Aorta (tissue), 5 donors: ENCODE measurements at regions of chr6 and their contacts with region 1.

Region 1: DNA sequence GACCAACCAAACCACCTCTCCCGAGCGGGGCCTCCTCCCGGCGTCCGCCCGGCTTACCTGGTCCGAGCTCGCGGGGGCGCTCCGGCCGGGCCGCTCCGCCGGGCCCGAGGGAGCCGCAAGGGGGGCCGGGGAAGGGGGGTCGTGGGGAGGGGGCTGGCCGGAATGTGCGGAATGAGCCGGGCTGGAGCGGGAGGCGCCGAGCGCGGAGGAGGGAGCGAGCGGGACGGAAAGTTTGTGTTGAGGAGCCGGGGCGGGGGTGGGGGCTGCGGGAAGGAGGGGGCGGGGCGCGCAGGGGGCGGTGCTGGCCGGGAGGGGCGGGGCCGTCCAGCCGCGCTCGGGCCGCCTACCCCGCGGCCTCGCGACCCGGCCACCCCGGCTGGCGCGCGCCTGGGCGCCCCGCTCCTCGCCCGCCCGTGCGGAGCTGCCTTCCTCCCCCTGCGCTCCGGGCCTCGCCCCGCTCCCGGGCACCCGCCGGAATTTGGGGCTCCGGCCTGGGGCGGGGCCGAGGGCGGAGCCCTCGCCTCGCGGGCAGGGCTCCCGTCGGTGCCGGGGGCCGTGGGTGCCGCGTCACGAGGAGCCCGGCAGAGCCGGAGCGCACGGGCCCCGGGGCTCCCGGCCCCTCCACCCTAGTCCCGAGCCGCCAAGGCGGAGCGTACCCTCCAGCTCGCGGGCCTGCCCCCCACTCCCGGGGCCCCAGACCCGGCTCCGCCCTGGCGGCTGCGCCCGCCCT is at the start of gene TEAD3:
- DNase-seq: peak in 1 of 2 donors; percentile 92
- ATAC-seq: peak; percentile 61
- H3K4me3 ChIP-seq: peak within 1 kb of the TSS; percentile 95
- H3K27ac ChIP-seq: peak within 1 kb of the TSS; percentile 79 to 87
- H3K4me1 ChIP-seq: no peaks in the 10 kb centered on the region
- H3K27me3 ChIP-seq: no peaks in the 10 kb centered on the region
- total RNA-seq, gene TEAD3: 43.5 to 78.0 TPM

Region 2: GRCh38 chr6:35468181-35468979 is 28.6 kb before region 1 on chr6 and contains the start of gene RPL10A:
- intact Hi-C with region 1: loop called in 1 of 2 experiments (anchors 2 kb)
- DNase-seq: peak; percentile 97
- ATAC-seq: peak; percentile 97
- H3K4me3 ChIP-seq: peak within 1 kb of the TSS; percentile 60
- H3K27ac ChIP-seq: peak within 1 kb of the TSS in 1 of 2 donors; percentile 76
- H3K4me1 ChIP-seq: no peaks in the 10 kb centered on the region
- H3K27me3 ChIP-seq: no peaks in the 10 kb centered on the region
- total RNA-seq, gene RPL10A: 834 to 875 TPM

Region 3: DNA sequence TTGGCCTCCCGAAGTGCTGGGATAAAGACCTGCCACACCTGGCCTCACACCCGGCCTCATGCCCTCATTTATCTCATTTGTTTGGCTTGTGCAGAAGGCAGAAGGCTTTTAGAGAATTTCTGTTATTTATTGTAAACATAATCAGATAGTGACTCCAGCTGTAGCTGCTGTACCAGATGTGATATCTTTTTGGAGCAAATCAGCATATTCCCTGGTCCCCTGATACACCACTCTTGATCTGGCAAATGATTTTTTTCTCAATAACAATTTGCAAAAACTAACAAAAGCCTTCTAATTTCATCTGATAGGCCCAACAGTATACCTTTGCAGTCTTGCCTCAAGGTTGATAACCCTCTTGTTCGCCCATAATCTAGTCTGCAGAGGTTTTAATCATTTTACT is 42.2 kb after region 1 on chr6:
- intact Hi-C with region 1: loop called in 1 of 2 experiments (anchors 2 kb)
- DNase-seq: no peak
- ATAC-seq: no peak
- H3K4me3 ChIP-seq: no peak overlapping the region
- H3K27ac ChIP-seq: no peak overlapping the region
- H3K4me1 ChIP-seq: no peaks in the 10 kb centered on the region
- H3K27me3 ChIP-seq: no peaks in the 10 kb centered on the region